MCF 10A (cell line): ENCODE measurements at regions of chr4 and their contacts with region 1.

Region 1: GRCh38 chr4:142778430-142778829 is 67.7 kb downstream of the INPP4B start:
- DNase-seq: peak; percentile 10
- H3K4me3 Mint-ChIP-seq: no peak overlapping the region
- H3K27ac Mint-ChIP-seq: peak overlapping the region; percentile 77
- H3K4me1 Mint-ChIP-seq: peaks cover 30% of the 10 kb centered on the region
- H3K27me3 Mint-ChIP-seq: no peaks in the 10 kb centered on the region
- CTCF ChIP-seq: no peak

Region 2: GRCh38 chr4:142817442-142817841 is 39.0 kb after region 1 on chr4:
- CTCF ChIA-PET with region 1: no interaction called
- POLR2A ChIA-PET with region 1: interaction called, 18 read pairs
- intact Hi-C with region 1: no loop called
- DNase-seq: peak; percentile 93
- H3K4me3 Mint-ChIP-seq: peak overlapping the region; percentile 52
- H3K27ac Mint-ChIP-seq: peak overlapping the region; percentile 94
- H3K4me1 Mint-ChIP-seq: peaks cover 29% of the 10 kb centered on the region
- H3K27me3 Mint-ChIP-seq: no peaks in the 10 kb centered on the region
- CTCF ChIP-seq: no peak

Region 3: GRCh38 chr4:143346206-143346605 is 567.8 kb after region 1 on chr4:
- CTCF ChIA-PET with region 1: no interaction called
- POLR2A ChIA-PET with region 1: no interaction called
- intact Hi-C with region 1: no loop called
- DNase-seq: peak; percentile 82
- H3K4me3 Mint-ChIP-seq: peak overlapping the region; percentile 33
- H3K27ac Mint-ChIP-seq: no peak overlapping the region
- H3K4me1 Mint-ChIP-seq: peaks cover 29% of the 10 kb centered on the region
- H3K27me3 Mint-ChIP-seq: no peaks in the 10 kb centered on the region
- CTCF ChIP-seq: no peak